Activated CD4-positive, alpha-beta memory T cell treated with anti-CD3 and anti-CD28 coated beads for 36 hours (primary cell): ENCODE measurements at regions of chr2 and their contacts with region 1.

Region 1: GRCh38 chr2:191625016-191625415 is 52.9 kb upstream of the NABP1 start:
- DNase-seq: peak; percentile 75
- H3K4me3 Mint-ChIP-seq: peak overlapping the region; percentile 35
- H3K27ac Mint-ChIP-seq: peak overlapping the region; percentile 89
- H3K4me1 Mint-ChIP-seq: peaks cover 84% of the 10 kb centered on the region
- H3K27me3 Mint-ChIP-seq: no peaks in the 10 kb centered on the region

Region 2: GRCh38 chr2:191555092-191555742 is 69.8 kb before region 1 on chr2:
- CTCF ChIA-PET with region 1: no interaction called
- POLR2A ChIA-PET with region 1: no interaction called
- intact Hi-C with region 1: no loop called
- DNase-seq: peak; percentile 88
- H3K4me3 Mint-ChIP-seq: no peak overlapping the region
- H3K27ac Mint-ChIP-seq: no peak overlapping the region
- H3K4me1 Mint-ChIP-seq: peaks cover 2% of the 10 kb centered on the region
- H3K27me3 Mint-ChIP-seq: peaks cover 8% of the 10 kb centered on the region

Region 3: GRCh38 chr2:191573216-191573615 is 51.8 kb before region 1 on chr2:
- CTCF ChIA-PET with region 1: interaction called, 3 read pairs
- POLR2A ChIA-PET with region 1: no interaction called
- intact Hi-C with region 1: loop called (anchors 1 kb)
- DNase-seq: no peak
- H3K4me3 Mint-ChIP-seq: no peak overlapping the region
- H3K27ac Mint-ChIP-seq: no peak overlapping the region
- H3K4me1 Mint-ChIP-seq: peaks cover 47% of the 10 kb centered on the region
- H3K27me3 Mint-ChIP-seq: no peaks in the 10 kb centered on the region